ENCODE measurements at regions of chr12 and their contacts with region 1.

Region 1: GRCh38 chr12:116172224-116172849 is 105.2 kb downstream of the MED13L start:
- DNase-seq: peak; percentile 39
- H3K4me3 Mint-ChIP-seq: peak overlapping the region; percentile 70
- H3K27ac Mint-ChIP-seq: peak overlapping the region; percentile 88
- H3K4me1 Mint-ChIP-seq: peaks cover 49% of the 10 kb centered on the region
- H3K27me3 Mint-ChIP-seq: no peaks in the 10 kb centered on the region

Region 2: DNA sequence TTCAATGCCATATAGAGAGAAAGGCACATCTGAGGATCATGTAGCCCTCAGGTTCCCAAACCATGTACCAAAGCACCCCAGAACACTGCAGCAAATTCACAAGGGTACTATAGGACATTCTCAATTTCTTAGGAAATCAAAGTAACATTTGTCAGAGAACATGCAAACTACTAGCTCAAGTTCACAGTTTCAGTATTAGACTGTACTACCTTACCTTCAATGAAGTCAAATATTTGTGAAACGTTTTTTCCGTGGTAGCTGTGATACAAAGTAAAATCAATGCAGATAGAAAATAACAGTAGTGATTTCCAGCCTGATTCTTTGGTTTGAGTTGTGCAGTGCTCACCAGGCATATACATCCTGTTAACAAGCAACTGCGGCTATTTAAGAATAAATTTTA is 91.9 kb before region 1 on chr12:
- intact Hi-C with region 1: loop called (anchors 2 kb)
- DNase-seq: no peak
- H3K4me3 Mint-ChIP-seq: no peak overlapping the region
- H3K27ac Mint-ChIP-seq: no peak overlapping the region
- H3K4me1 Mint-ChIP-seq: peaks cover 10% of the 10 kb centered on the region
- H3K27me3 Mint-ChIP-seq: no peaks in the 10 kb centered on the region

Region 3: GRCh38 chr12:116142936-116143898 is 29.1 kb before region 1 on chr12:
- intact Hi-C with region 1: loop called (anchors 1 kb)
- DNase-seq: no peak
- H3K4me3 Mint-ChIP-seq: peak overlapping the region; percentile 45
- H3K27ac Mint-ChIP-seq: peak overlapping the region; percentile 81
- H3K4me1 Mint-ChIP-seq: peaks cover 52% of the 10 kb centered on the region
- H3K27me3 Mint-ChIP-seq: no peaks in the 10 kb centered on the region

Region 4: DNA sequence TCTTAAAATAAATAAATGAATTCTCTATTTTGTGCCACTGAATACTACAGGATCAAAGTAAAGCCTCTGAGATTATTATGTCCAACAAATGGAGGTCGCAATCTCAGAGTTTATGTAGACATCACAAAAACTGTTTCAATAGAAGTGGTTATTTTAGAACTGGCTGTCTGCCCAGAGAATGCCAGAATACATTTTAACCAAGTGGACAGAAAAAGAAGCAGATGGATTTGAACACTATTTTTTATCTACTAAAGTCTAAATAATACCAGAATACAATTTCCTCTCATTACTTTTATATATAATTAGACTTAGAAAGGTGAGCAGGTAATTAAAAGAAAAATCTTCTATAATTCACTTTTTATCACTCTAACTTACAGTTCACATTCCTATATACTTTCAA is 13.2 kb before region 1 on chr12:
- intact Hi-C with region 1: no loop called
- DNase-seq: no peak
- H3K4me3 Mint-ChIP-seq: no peak overlapping the region
- H3K27ac Mint-ChIP-seq: no peak overlapping the region
- H3K4me1 Mint-ChIP-seq: peaks cover 33% of the 10 kb centered on the region
- H3K27me3 Mint-ChIP-seq: no peaks in the 10 kb centered on the region

Region 5: DNA sequence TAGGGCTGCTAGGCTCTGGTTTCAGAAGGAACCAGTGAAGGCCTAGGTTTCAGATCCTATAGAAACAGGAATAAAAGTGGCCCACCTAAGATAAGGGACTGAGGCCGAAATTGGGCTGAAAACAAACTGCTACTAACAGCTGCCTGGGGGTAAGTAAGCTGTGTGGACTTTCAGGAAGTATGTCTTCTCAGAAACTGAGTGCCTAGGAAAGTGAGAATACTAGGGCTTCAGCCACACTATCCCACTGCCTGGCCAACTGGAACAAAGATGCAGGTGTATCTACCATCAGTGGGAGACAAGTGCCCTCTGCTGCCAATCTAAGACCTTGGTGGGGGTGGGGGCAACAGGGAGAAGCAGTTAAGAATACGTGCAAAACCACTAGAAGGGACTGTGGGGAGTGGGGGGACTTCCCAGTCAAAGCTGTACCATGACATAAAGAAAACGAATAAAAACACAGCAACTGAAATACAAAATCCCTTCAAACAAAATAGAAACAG is 22.6 kb after region 1 on chr12:
- intact Hi-C with region 1: loop called (anchors 1 kb)
- DNase-seq: peak; percentile 60
- H3K4me3 Mint-ChIP-seq: peak overlapping the region; percentile 50
- H3K27ac Mint-ChIP-seq: peak overlapping the region; percentile 77
- H3K4me1 Mint-ChIP-seq: peaks cover 48% of the 10 kb centered on the region
- H3K27me3 Mint-ChIP-seq: peaks cover 2% of the 10 kb centered on the region

Region 6: GRCh38 chr12:116257215-116257614 is 84.9 kb after region 1 on chr12:
- intact Hi-C with region 1: no loop called
- DNase-seq: no peak
- H3K4me3 Mint-ChIP-seq: no peak overlapping the region
- H3K27ac Mint-ChIP-seq: no peak overlapping the region
- H3K4me1 Mint-ChIP-seq: peaks cover 34% of the 10 kb centered on the region
- H3K27me3 Mint-ChIP-seq: no peaks in the 10 kb centered on the region

Region 7: DNA sequence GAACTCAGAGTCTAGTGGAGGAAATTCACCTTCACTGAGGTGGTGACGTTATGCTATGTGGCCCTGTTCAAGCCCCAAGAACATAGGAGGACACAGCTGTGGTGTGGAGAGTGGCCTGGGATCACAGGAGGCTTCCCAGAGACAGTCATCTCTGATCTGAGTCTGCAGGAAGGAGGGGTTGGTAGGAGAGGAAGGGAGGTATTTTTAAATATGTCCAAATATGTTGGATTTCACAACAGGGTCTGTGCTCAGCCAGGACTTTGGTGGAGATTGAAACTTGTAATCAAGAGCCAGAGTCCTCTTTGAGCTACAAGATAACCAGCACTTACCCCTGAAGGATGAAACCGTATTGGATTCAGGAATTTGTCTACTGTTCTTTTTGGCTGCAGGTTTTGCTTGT is 131.6 kb after region 1 on chr12:
- intact Hi-C with region 1: no loop called
- DNase-seq: no peak
- H3K4me3 Mint-ChIP-seq: no peak overlapping the region
- H3K27ac Mint-ChIP-seq: no peak overlapping the region
- H3K4me1 Mint-ChIP-seq: no peaks in the 10 kb centered on the region
- H3K27me3 Mint-ChIP-seq: peaks cover 11% of the 10 kb centered on the region

Measured in activated T-helper 1 cell treated with anti-CD3 and anti-CD28 coated beads, Interleukin-12 subunit alpha, Interleukin-12 subunit beta, Interleukin-2, Interleukin-4 antibody, amounts not matched to agents 30 ng/mL and 10 ng/mL and 1 ng/mL, durations not matched to agents 14 hours and 24 hours and 36 hours (primary cell).